ENCODE measurements at regions of chr12 and their contacts with region 1.

Region 1: GRCh38 chr12:6873094-6874014 is at the start of gene SPSB2:
- DNase-seq: peak; percentile 96 to 100 (median 99)
- ATAC-seq: peak; percentile 90
- H3K4me3 ChIP-seq: peak within 1 kb of the TSS; percentile 89 to 99
- H3K4me3 Mint-ChIP-seq: peak within 1 kb of the TSS; percentile 90
- H3K27ac ChIP-seq: peak within 1 kb of the TSS; percentile 77 to 83
- H3K27ac Mint-ChIP-seq: peak within 1 kb of the TSS; percentile 90
- H3K4me1 ChIP-seq: peaks cover 44% of the 10 kb centered on the region
- H3K4me1 Mint-ChIP-seq: peaks cover 47% of the 10 kb centered on the region
- H3K27me3 ChIP-seq: no peaks in the 10 kb centered on the region
- H3K27me3 Mint-ChIP-seq: no peaks in the 10 kb centered on the region
- CTCF ChIP-seq: no peak
- total RNA-seq, gene SPSB2: 2.6 to 3.0 TPM

Region 2: DNA sequence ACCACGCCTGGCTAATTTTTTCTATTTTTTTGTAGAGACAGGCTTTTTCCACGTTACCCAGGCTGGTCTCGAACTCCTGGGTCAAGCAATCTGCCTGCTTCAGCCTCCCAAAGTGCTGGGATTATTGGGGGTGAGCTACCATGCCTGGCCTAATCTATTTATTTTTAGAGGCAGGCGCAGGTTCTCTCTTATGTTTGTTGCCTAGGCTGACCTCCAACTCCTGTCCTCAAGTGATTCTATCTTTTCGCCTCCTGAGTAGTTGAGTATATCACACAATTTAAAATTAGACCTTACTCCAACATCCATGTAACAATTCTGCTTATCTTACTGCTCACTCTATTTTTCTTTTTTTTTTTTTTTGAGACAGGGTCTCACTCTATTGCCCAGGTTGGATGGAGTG is 219.4 kb before region 1 on chr12:
- CTCF ChIA-PET with region 1: no interaction called
- POLR2A ChIA-PET with region 1: no interaction called
- intact Hi-C with region 1: no loop called
- DNase-seq: no peak
- ATAC-seq: no peak
- H3K4me3 ChIP-seq: no peak overlapping the region
- H3K4me3 Mint-ChIP-seq: no peak overlapping the region
- H3K27ac ChIP-seq: no peak overlapping the region
- H3K27ac Mint-ChIP-seq: no peak overlapping the region
- H3K4me1 ChIP-seq: no peaks in the 10 kb centered on the region
- H3K4me1 Mint-ChIP-seq: peaks cover 16% of the 10 kb centered on the region
- H3K27me3 ChIP-seq: no peaks in the 10 kb centered on the region
- H3K27me3 Mint-ChIP-seq: no peaks in the 10 kb centered on the region
- CTCF ChIP-seq: no peak

Region 3: GRCh38 chr12:6884539-6884938 is 11.2 kb after region 1 on chr12:
- CTCF ChIA-PET with region 1: interaction called, 33 read pairs
- POLR2A ChIA-PET with region 1: interaction called, 5 read pairs
- intact Hi-C with region 1: no loop called
- DNase-seq: no peak
- ATAC-seq: no peak
- H3K4me3 ChIP-seq: no peak overlapping the region
- H3K4me3 Mint-ChIP-seq: no peak overlapping the region
- H3K27ac ChIP-seq: no peak overlapping the region
- H3K27ac Mint-ChIP-seq: no peak overlapping the region
- H3K4me1 ChIP-seq: no peaks in the 10 kb centered on the region
- H3K4me1 Mint-ChIP-seq: no peaks in the 10 kb centered on the region
- H3K27me3 ChIP-seq: no peaks in the 10 kb centered on the region
- H3K27me3 Mint-ChIP-seq: no peaks in the 10 kb centered on the region
- CTCF ChIP-seq: no peak

Region 4: GRCh38 chr12:6914246-6914946 is 41.0 kb after region 1 on chr12 and contains the start of gene ENO2:
- CTCF ChIA-PET with region 1: interaction called, 16 read pairs
- POLR2A ChIA-PET with region 1: interaction called, 13 read pairs
- intact Hi-C with region 1: loop called (anchors 1 to 2 kb)
- DNase-seq: peak; percentile 59 to 92 (median 89)
- ATAC-seq: peak; percentile 94
- H3K4me3 ChIP-seq: peak within 1 kb of the TSS; percentile 52 to 83
- H3K4me3 Mint-ChIP-seq: peak within 1 kb of the TSS; percentile 95
- H3K27ac ChIP-seq: peak within 1 kb of the TSS; percentile 77 to 88
- H3K27ac Mint-ChIP-seq: peak within 1 kb of the TSS; percentile 95
- H3K4me1 ChIP-seq: peaks cover 18% of the 10 kb centered on the region
- H3K4me1 Mint-ChIP-seq: peaks cover 31% of the 10 kb centered on the region
- H3K27me3 ChIP-seq: no peaks in the 10 kb centered on the region
- H3K27me3 Mint-ChIP-seq: no peaks in the 10 kb centered on the region
- CTCF ChIP-seq: no peak
- total RNA-seq, gene ENO2: 95.5 to 99.6 TPM

Region 5: GRCh38 chr12:6944381-6945186 is 71.2 kb after region 1 on chr12:
- CTCF ChIA-PET with region 1: interaction called, 75 read pairs
- POLR2A ChIA-PET with region 1: interaction called, 45 read pairs
- intact Hi-C with region 1: no loop called
- DNase-seq: peak; percentile 67 to 94 (median 89)
- ATAC-seq: peak; percentile 51
- H3K4me3 ChIP-seq: peak overlapping the region; percentile 90 to 97
- H3K4me3 Mint-ChIP-seq: peak overlapping the region; percentile 99
- H3K27ac ChIP-seq: peak overlapping the region; percentile 94 to 97
- H3K27ac Mint-ChIP-seq: peak overlapping the region; percentile 100
- H3K4me1 ChIP-seq: peaks cover 56% of the 10 kb centered on the region
- H3K4me1 Mint-ChIP-seq: peaks cover 63% of the 10 kb centered on the region
- H3K27me3 ChIP-seq: no peaks in the 10 kb centered on the region
- H3K27me3 Mint-ChIP-seq: no peaks in the 10 kb centered on the region
- CTCF ChIP-seq: peak; percentile 87

Region 6: DNA sequence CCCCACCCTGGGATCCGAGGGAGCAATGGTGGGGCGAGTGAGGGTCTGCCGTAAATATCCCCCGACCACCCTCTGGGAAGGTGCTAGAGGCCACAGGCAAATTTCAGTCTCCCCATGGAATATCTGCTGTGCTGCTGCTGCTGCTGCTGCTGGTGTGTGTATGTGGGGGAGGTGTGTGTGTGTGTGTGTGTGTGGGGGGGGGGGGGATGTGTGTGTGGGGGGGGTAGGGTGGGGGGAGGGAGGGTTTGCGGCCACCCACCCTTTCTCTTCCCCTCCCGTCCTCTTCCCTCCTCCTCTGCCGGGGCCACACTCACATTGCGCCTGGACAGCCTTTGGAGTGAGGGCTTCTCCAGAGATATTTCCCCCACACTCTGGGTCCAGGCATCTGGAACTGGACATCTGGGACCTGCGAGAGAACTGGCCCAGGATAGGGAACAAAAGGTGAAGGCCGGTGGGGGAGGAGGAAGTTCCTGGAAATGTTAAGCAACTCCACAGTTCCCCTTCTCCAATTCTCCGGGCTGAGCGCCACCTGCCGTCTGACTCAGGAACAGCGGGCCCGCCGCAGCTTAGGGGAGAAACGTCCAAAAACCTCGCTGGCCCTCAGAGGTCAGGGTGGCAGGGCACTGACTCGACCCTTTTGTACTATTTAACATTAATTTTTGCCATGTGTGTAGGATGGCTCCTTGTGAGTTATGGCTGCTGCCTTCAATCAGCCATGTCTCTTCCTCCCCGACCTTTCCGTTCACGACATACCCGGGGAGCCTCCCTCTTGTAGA is 235.6 kb after region 1 on chr12 and contains the start of gene C1RL:
- CTCF ChIA-PET with region 1: interaction called, 43 read pairs
- POLR2A ChIA-PET with region 1: interaction called, 7 read pairs
- intact Hi-C with region 1: loop called (anchors 1 to 2 kb)
- DNase-seq: peak; percentile 58 to 85 (median 77)
- ATAC-seq: peak; percentile 46
- H3K4me3 ChIP-seq: peak within 1 kb of the TSS; percentile 88 to 97
- H3K4me3 Mint-ChIP-seq: peak within 1 kb of the TSS; percentile 94
- H3K27ac ChIP-seq: peak within 1 kb of the TSS; percentile 67 to 80
- H3K27ac Mint-ChIP-seq: peak within 1 kb of the TSS; percentile 93
- H3K4me1 ChIP-seq: peaks cover 16% of the 10 kb centered on the region
- H3K4me1 Mint-ChIP-seq: peaks cover 44% of the 10 kb centered on the region
- H3K27me3 ChIP-seq: no peaks in the 10 kb centered on the region
- H3K27me3 Mint-ChIP-seq: no peaks in the 10 kb centered on the region
- CTCF ChIP-seq: peak; percentile 90
- total RNA-seq, gene C1RL: 8.0 to 9.0 TPM